ENCODE measurements at regions of chr12 and their contacts with region 1.

Region 1: GRCh38 chr12:50458606-50459005 is 46.2 kb upstream of the DIP2B start:
- DNase-seq: no peak
- H3K4me3 ChIP-seq: no peak overlapping the region
- H3K27ac ChIP-seq: no peak overlapping the region
- H3K4me1 ChIP-seq: no peaks in the 10 kb centered on the region
- H3K27me3 ChIP-seq: no peaks in the 10 kb centered on the region
- CTCF ChIP-seq: no peak
- EP300 ChIP-seq: no peak
- POLR2A ChIP-seq: no peak

Region 2: DNA sequence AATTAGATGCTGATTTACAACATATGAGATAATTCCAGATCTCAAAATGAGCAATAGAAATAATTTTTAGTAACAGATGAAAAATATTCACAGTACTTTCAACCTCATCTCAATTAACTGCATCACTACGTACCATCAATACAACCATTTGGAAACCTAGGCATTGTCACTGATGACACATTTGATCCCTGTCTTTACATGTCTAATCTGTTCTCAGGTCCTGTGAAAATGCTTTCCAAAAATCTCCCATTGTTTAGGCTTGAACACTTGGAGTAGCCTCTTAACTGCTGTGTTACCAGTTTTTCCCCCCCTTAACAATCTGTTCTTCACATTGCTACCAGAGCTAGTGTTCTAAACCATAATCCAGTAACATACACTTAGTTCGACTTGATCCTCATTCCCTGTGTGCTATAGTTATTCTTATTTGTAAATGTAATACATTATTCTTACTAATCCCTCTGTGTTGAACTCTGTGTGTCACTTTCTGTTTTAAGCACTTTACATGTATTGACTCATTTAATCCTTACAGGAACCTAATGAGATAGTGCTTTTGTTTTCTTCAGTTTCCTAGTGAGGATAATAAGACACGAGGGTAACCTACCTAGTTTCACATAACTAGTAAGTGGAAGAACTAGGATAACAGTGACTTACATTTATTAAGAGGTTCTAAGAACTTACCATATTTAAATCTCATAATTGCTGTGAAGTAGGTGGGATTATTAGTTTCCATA is 16.3 kb before region 1 on chr12:
- in situ Hi-C with region 1: no loop called
- intact Hi-C with region 1: no loop called
- DNase-seq: no peak
- H3K4me3 ChIP-seq: no peak overlapping the region
- H3K27ac ChIP-seq: no peak overlapping the region
- H3K4me1 ChIP-seq: no peaks in the 10 kb centered on the region
- H3K27me3 ChIP-seq: no peaks in the 10 kb centered on the region
- CTCF ChIP-seq: no peak
- EP300 ChIP-seq: no peak
- POLR2A ChIP-seq: no peak

Region 3: GRCh38 chr12:50572271-50572670 is 113.7 kb after region 1 on chr12:
- in situ Hi-C with region 1: loop called in 1 of 4 experiments (anchors 25 kb)
- intact Hi-C with region 1: no loop called
- DNase-seq: no peak
- H3K4me3 ChIP-seq: no peak overlapping the region
- H3K27ac ChIP-seq: peak overlapping the region; percentile 19 to 49 (median 32)
- H3K4me1 ChIP-seq: peaks cover 30 to 74% (median 62%) of the 10 kb centered on the region in 4 donors
- H3K27me3 ChIP-seq: no peaks in the 10 kb centered on the region
- CTCF ChIP-seq: no peak
- EP300 ChIP-seq: no peak
- POLR2A ChIP-seq: no peak

Measured in transverse colon (tissue), 4 donors.